OCI-LY7 (cell line): ENCODE measurements at regions of chr2 and their contacts with region 1.

Region 1: DNA sequence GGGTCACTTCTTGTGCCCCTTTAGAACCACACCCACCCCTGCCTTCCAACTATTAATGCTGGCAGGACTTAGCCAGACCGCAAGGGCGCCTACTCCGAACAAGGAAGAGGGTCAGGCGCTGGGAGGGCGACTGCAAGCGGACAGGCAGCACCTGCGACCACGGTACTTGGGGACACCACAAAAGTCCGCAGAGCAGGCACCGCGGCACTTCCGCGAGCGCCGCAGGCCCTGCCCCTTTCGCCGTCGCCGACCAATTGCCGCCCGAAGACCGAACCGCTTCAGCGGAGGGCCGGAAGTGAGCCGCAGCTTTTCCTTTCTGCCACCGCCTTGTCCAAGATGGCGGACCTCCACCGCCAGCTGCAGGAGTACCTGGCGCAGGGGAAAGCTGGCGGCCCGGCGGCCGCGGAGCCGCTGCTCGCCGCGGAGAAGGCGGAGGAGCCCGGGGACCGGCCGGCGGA is at the start of gene SFT2D3:
- DNase-seq: peak; percentile 95
- H3K4me3 ChIP-seq: peak within 1 kb of the TSS; percentile 69
- H3K27ac ChIP-seq: peak within 1 kb of the TSS; percentile 66
- H3K4me1 ChIP-seq: peaks cover 31% of the 10 kb centered on the region
- CTCF ChIP-seq: no peak
- total RNA-seq, gene SFT2D3: 11.0 and 14.3 TPM in 2 replicates

Region 2: DNA sequence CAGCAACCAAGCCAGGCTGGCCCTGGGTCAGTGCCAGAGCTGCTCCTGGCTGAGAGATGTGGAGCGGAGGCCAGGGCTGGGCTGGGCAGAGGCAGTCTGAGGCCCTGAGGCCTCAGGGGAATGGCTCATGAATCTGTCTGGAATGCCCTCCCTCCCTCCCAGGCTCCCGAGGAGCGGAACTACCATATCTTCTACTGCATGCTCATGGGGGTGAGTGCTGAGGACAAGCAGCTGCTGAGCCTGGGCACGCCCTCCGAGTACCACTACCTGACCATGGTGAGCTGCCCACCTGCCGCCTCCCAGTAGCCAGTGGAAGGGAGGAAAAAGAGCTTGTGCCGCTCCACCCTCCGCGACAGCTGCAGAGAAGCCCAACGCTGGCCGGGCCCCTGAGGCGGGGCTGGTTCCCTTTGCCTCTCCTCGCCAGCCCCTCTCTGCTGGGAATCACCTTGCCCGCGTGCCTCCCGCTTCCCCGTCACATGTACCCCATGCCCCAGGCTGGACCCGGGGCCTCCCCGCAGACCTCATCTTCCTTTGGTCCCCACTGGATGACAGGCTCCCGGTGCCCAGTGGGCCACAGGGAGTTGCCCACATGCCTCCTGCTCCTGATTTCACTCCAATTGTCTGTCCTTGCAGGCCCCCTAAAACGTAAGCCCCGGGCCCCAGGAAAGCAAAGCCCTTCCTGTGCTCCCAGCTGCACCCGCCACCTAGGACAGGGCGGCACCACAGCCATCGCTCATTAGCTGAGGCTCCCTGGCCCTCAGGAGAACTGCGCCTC is 124.6 kb before region 1 on chr2:
- CTCF ChIA-PET with region 1: no interaction called
- POLR2A ChIA-PET with region 1: no interaction called
- intact Hi-C with region 1: loop called (anchors 5 kb)
- DNase-seq: no peak
- H3K4me3 ChIP-seq: no peak overlapping the region
- H3K27ac ChIP-seq: no peak overlapping the region
- H3K4me1 ChIP-seq: peaks cover 16% of the 10 kb centered on the region
- CTCF ChIP-seq: no peak

Region 3: DNA sequence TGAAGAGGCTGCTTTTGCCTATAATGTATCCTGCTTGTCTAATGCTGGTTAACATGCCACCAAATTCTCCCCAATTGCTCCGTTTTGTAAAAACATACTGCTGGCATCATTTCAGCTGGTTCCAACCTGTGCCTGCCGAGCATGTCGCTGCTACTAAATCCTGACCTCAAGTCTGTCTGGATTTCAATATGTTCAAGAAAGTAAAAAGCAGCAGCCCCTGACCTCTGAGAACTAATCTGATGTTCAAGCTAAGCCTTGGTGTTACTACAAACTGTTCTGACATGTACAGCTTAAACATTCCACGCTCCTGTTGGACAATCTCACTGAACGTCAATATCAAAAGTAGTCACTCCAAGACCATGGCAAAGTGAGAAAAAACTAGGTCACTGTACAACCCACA is 46.4 kb after region 1 on chr2:
- CTCF ChIA-PET with region 1: no interaction called
- POLR2A ChIA-PET with region 1: interaction called, 4 read pairs
- intact Hi-C with region 1: loop called (anchors 2 kb)
- DNase-seq: no peak
- H3K4me3 ChIP-seq: no peak overlapping the region
- H3K27ac ChIP-seq: no peak overlapping the region
- H3K4me1 ChIP-seq: peaks cover 13% of the 10 kb centered on the region
- CTCF ChIP-seq: no peak

Region 4: GRCh38 chr2:127844973-127845372 is 143.8 kb after region 1 on chr2:
- CTCF ChIA-PET with region 1: no interaction called
- POLR2A ChIA-PET with region 1: no interaction called
- intact Hi-C with region 1: no loop called
- DNase-seq: no peak
- H3K4me3 ChIP-seq: no peak overlapping the region
- H3K27ac ChIP-seq: no peak overlapping the region
- H3K4me1 ChIP-seq: no peaks in the 10 kb centered on the region
- CTCF ChIP-seq: no peak

Region 5: DNA sequence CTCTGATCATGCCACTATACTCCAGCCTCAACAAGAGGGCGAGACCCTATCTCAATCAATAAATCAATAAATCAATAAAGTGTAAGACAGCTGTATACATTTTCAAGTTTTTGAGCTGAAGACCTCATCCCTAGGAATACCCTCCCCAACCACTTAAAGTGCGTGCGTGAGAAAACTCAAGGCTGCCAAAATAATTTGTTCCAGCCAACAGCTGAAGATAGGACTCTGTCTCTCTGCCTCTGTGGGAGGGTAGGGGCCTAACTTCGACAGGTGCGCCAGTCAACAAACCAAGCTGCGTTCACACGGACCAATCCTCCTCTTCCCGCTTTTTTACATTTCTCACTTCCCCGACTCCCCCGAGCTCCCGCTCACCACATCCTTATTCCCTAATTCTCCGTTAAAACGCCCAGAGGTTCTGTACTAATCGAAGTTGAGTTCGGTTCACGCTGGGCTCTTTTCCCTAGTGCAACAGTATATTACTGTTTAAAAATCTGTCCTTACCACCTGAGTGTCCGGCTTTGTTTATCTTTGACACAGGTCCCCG is 156.1 kb after region 1 on chr2:
- CTCF ChIA-PET with region 1: interaction called, 5 read pairs
- POLR2A ChIA-PET with region 1: no interaction called
- intact Hi-C with region 1: loop called (anchors 5 kb)
- DNase-seq: peak; percentile 67
- H3K4me3 ChIP-seq: peak overlapping the region; percentile 96
- H3K27ac ChIP-seq: peak overlapping the region; percentile 77
- H3K4me1 ChIP-seq: peaks cover 58% of the 10 kb centered on the region
- CTCF ChIP-seq: no peak

Region 6: GRCh38 chr2:128090945-128091725 is 389.9 kb after region 1 on chr2 and contains the start of gene UGGT1:
- CTCF ChIA-PET with region 1: interaction called, 3 read pairs
- POLR2A ChIA-PET with region 1: interaction called, 5 read pairs
- intact Hi-C with region 1: loop called (anchors 2 kb)
- DNase-seq: peak; percentile 98
- H3K4me3 ChIP-seq: peak within 1 kb of the TSS; percentile 95
- H3K27ac ChIP-seq: peak within 1 kb of the TSS; percentile 67
- H3K4me1 ChIP-seq: peaks cover 34% of the 10 kb centered on the region
- CTCF ChIP-seq: no peak
- total RNA-seq, gene UGGT1: 33.2 and 39.7 TPM in 2 replicates

Region 7: DNA sequence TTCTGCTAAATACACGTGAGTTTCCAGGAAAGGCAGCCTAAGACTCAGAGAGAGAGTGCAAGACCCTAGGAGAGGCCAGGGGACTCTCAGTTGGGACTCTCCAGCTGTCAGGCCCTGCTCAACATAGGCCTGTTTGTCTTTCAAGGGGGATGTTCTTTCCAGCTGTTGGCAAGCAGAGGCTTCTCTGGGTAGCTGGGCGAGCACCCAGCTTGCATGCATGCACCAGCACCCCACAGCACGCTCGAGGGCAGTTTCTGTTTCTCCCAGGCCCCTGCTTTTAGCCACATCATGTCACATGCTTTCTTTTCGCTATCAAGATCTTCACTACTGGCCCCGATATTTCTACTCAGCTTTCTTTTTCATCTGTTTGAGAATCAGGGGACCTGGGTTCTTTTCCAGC is 1096.7 kb after region 1 on chr2:
- CTCF ChIA-PET with region 1: no interaction called
- POLR2A ChIA-PET with region 1: no interaction called
- intact Hi-C with region 1: no loop called
- DNase-seq: no peak
- H3K4me3 ChIP-seq: no peak overlapping the region
- H3K27ac ChIP-seq: no peak overlapping the region
- H3K4me1 ChIP-seq: no peaks in the 10 kb centered on the region
- CTCF ChIP-seq: no peak